Ascending aorta (tissue), 2 donors: ENCODE measurements at regions of chr13 and their contacts with region 1.

Region 1: GRCh38 chr13:101144808-101145419 is 271.4 kb downstream of the NALCN start:
- DNase-seq: no peak
- H3K4me3 ChIP-seq: no peak overlapping the region
- H3K27ac ChIP-seq: no peak overlapping the region
- H3K4me1 ChIP-seq: no peaks in the 10 kb centered on the region
- H3K27me3 ChIP-seq: no peaks in the 10 kb centered on the region
- CTCF ChIP-seq: peak; percentile 49 to 74 (median 71)

Region 2: GRCh38 chr13:101289764-101290163 is 144.8 kb after region 1 on chr13:
- intact Hi-C with region 1: loop called (anchors 10 kb)
- DNase-seq: no peak
- H3K4me3 ChIP-seq: no peak overlapping the region
- H3K27ac ChIP-seq: no peak overlapping the region
- H3K4me1 ChIP-seq: no peaks in the 10 kb centered on the region
- H3K27me3 ChIP-seq: no peaks in the 10 kb centered on the region
- CTCF ChIP-seq: no peak

Region 3: GRCh38 chr13:101474419-101474957 is 329.6 kb after region 1 on chr13:
- intact Hi-C with region 1: loop called (anchors 10 kb)
- DNase-seq: no peak
- H3K4me3 ChIP-seq: no peak overlapping the region
- H3K27ac ChIP-seq: peak overlapping the region; percentile 43 to 69
- H3K4me1 ChIP-seq: peaks cover 0 to 18% of the 10 kb centered on the region in 2 donors
- H3K27me3 ChIP-seq: no peaks in the 10 kb centered on the region
- CTCF ChIP-seq: peak in 1 of 3 experiments; percentile 29

Region 4: GRCh38 chr13:101661839-101662238 is 516.9 kb after region 1 on chr13:
- intact Hi-C with region 1: no loop called
- DNase-seq: no peak
- H3K4me3 ChIP-seq: no peak overlapping the region
- H3K27ac ChIP-seq: no peak overlapping the region
- H3K4me1 ChIP-seq: no peaks in the 10 kb centered on the region
- H3K27me3 ChIP-seq: no peaks in the 10 kb centered on the region
- CTCF ChIP-seq: no peak

Region 5: DNA sequence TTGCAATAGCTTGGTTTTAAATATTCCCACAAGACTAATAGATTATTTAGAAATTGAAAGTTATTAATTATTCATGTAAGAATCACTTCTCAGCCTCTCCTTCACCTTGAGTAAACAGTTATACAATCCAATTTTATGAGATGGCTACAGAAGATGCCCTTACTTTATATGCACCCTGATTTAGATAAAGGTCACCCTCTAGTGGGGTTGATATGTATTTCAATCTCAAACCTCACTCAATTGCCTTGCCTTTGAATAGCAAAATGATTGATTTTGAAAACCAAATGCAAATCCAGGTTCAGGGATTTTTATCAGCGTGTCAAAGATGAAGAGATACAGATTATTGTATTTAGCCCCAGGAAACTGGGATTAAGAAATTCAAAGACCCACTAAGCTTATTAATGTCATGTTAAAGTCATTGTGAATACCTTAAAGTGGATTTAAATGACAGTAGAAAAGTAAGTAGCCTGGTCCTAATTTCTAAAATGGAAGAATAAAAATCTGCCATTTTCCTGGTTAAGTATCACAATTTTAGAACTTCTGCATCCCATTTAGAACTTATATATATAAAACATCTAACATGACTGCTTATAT is 612.6 kb after region 1 on chr13:
- intact Hi-C with region 1: loop called (anchors 1 kb)
- DNase-seq: no peak
- H3K4me3 ChIP-seq: no peak overlapping the region
- H3K27ac ChIP-seq: no peak overlapping the region
- H3K4me1 ChIP-seq: no peaks in the 10 kb centered on the region
- H3K27me3 ChIP-seq: no peaks in the 10 kb centered on the region
- CTCF ChIP-seq: peak; percentile 46 to 67 (median 47)